AG04449 (cell line): ENCODE measurements at regions of chr2 and their contacts with region 1.

Region 1: DNA sequence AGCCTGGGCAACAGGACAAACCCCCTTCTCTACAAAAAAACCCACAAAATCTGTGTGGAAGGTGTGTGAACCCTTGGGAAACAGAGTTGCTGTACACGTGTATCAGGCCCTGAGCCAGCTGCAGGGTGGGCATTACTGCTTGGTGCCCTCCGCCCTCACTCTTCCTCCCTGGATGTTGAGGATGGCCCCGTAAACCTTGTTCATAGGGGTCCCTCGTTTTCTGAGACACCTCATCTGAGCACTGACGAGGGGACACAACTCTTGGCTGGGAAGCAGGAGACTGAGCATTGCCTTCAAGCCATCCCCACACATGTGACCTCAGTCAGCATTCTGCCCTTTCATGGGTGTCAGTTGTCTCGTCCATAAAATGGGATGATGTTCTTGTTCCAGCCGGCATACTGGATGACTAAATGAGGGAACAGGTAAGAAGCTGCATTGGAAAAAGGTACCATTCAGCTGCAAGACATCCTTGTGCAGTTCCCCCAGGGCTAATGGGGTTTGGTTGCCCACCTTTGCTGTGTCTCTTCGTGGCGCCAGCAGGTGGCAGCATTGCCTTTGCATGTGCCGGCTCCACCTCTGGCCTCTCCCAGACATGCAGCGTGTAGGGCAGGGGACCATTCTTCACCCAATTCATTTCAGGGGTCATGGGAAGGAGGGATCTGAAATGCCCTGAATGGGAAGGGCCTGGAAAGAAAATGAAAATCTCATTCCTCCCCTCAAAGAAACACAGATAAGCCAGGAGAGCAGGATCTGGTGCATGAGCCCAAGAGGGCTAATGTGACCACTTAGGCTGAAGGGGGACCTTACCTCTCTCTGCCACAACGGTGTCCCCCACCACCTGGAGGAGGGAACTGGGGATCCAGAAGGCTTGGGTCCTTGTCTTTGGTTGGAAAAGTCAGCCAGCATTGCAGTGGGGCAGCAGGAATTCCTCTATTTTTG is 36.4 kb upstream of the HAAO start:
- DNase-seq: no peak
- H3K4me3 ChIP-seq: no peak overlapping the region
- CTCF ChIP-seq: peak; percentile 88

Region 2: GRCh38 chr2:42648796-42649195 is 180.0 kb before region 1 on chr2:
- CTCF ChIA-PET with region 1: no interaction called
- POLR2A ChIA-PET with region 1: no interaction called
- DNase-seq: no peak
- H3K4me3 ChIP-seq: no peak overlapping the region
- CTCF ChIP-seq: no peak

Region 3: DNA sequence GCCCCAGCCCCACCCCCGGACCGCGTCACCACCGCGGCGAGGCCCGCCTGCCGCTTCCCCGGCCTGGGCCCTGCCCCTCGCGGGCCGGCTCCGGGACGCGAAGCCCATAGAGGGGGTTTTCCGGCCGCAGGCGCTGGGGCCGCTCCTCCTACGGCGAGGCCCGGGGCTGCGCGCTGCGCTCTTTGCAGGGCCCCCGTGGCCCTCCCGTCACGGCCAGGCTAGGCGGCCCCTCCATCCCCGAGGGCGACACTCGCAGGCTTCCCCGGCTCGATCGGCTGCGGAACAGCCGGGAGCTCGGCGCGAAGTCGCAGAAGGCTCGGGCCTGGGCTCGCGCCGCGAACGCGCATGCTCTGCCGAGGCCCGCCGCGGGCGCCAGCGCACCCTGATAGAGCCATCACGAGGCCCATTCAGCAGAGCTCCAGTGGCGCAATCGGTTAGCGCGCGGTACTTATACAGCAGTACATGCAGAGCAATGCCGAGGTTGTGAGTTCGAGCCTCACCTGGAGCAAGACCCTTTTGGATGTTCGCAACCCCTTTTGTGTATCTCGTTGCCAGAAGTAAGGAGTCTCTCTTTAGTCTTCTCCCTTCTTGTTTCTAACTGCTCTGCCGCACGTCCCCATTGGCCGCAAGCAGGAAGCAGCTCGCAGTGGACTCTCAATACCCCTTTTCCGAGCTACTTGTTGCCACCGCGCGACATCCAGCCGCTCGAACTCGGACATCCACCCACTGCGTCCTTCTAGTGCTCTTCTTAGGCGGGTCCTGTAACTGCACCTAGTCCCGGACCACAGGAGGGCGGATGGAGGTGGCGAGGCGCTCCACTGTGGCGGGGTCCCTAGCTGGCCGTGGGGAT is 18.4 kb before region 1 on chr2:
- CTCF ChIA-PET with region 1: interaction called, 75 read pairs
- POLR2A ChIA-PET with region 1: interaction called, 3 read pairs
- DNase-seq: peak; percentile 91
- H3K4me3 ChIP-seq: peak overlapping the region; percentile 70
- CTCF ChIP-seq: no peak

Region 4: GRCh38 chr2:42859006-42859552 is 30.3 kb after region 1 on chr2:
- CTCF ChIA-PET with region 1: interaction called, 42 read pairs
- POLR2A ChIA-PET with region 1: no interaction called
- DNase-seq: peak; percentile 24
- H3K4me3 ChIP-seq: no peak overlapping the region
- CTCF ChIP-seq: peak; percentile 72

Region 5: DNA sequence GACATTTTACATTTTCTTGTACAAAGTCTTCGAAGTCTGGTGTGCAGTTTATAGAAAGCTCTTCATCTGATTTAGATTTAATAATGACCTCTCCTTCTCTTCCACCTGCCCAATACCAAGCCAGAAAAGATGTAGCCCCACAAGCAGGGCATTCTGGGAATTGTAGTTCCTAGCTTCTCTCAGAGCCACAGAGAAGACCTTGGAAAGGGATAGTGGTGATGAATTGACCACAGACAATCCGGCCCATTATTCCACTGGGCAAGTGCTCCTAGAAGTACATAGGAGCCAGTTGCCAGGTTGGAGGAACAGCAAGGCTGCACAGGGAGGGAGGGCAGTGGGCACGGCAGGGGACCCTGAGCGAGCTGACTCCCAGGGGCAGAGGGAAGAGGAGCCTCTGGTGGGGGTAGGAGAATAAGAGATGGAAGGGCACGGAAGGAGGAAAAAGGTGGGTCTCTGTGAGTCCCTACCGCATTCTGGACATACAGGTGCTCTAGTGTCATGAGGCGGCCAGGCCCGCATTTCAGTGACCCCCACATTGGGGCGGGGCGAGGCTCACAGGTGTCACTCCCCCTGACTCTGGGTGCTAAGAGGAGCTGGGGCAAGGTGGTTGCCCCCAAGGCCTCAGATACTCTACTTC is 116.1 kb after region 1 on chr2:
- CTCF ChIA-PET with region 1: interaction called, 62 read pairs
- POLR2A ChIA-PET with region 1: no interaction called
- DNase-seq: no peak
- H3K4me3 ChIP-seq: no peak overlapping the region
- CTCF ChIP-seq: no peak

Region 6: DNA sequence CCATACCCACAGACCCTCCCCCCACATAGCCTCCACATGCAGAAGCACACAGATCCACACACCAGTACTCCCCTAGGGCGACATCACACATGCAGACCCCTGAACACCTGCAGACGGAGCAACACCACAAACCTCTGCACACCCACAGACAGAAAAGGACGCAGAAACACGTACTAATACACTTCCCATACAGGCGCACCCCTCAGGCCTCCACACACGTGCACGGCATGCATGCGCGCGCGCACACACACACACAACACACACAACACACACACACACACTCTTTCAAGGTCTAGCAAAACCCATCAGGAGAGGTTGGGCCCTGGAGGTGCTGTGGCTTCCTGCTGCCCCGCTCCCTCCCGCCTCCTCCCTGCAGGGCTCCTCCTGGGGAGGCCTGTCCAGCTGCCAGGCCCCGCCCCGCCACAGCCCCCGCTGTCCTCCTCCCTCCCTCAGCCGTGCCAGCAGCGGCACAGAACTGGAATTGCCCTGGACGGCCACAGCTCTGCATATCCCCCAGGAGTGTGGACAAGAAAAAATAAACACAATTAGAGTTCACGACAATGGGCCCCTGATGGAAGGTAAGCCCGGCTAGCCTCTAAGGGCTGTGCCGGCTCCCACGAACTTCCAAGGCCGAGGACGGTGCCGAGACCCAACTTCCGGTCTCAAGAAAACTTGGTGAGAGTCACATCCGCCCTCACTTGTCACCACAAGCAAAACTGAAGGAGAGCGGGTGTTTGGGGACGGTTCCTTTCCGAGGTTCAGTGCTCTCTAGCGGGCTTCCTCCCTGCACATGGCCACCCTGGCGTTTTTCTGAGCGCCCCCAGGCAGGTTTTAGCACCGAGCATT is 390.9 kb after region 1 on chr2:
- CTCF ChIA-PET with region 1: interaction called, 16 read pairs
- POLR2A ChIA-PET with region 1: no interaction called
- DNase-seq: no peak
- H3K4me3 ChIP-seq: peak overlapping the region; percentile 86
- CTCF ChIP-seq: no peak

Region 7: DNA sequence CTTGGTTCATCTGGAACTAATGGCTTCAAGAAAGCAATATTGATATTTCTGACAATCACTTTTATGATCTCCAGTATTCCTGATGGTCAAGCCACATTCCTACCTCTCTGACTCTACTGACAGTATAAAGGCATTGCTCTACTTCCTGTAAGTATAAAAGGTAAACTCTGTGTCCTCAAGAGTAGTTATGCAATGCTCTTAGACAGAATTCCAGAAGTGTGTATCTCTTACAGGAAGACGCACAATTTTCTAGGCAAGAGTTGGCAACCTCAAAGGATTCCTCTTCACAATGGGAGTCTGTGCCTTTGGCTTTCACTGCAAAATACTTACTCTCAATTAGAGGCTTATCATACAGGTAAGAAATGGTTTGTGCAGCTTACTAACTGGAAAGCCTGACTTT is 667.0 kb after region 1 on chr2:
- CTCF ChIA-PET with region 1: interaction called, 10 read pairs
- POLR2A ChIA-PET with region 1: no interaction called
- DNase-seq: no peak
- H3K4me3 ChIP-seq: no peak overlapping the region
- CTCF ChIP-seq: no peak

Region 8: GRCh38 chr2:43576981-43577892 is 748.5 kb after region 1 on chr2:
- CTCF ChIA-PET with region 1: interaction called, 64 read pairs
- POLR2A ChIA-PET with region 1: no interaction called
- DNase-seq: peak; percentile 33
- H3K4me3 ChIP-seq: no peak overlapping the region
- CTCF ChIP-seq: peak; percentile 58